ENCODE measurements at regions of chr2 and their contacts with region 1.

Region 1: DNA sequence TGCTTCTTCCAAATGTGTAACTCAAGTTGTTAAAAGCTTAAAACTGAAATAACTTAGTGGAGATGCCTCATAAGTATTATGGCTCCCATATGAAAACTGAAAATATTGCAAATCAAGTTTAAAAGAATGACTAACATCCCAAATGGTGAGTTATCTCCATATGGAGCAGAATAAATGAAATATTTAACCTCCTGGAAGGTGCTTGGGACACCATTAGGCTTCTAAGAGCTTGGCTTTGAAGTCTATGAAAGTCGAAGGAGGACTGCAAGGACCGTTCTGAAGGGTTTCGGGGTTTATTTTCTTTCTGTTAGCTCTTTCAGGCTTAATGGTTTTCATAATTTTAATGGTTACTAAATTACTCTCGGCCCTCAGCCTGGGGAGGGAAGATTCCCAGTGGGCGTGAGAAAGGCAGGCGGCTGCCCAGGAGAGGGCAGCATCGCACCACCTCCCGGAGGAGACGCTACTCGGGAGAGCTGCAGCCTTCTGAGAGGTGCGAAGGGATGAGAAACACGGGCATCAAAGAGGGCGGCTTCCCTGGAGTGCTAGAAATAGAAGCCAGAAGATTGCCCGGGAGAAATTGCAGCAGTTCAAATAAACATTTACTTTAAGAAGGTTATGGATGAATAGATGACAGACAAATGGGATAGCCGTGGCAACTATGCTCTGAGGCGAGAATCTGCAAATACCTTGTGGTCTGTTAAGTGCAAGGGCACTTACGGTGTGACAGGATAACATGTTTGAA is 43.1 kb downstream of the MAP3K19 start:
- DNase-seq: peak; percentile 40 to 68
- H3K4me3 ChIP-seq: no peak overlapping the region
- H3K27ac ChIP-seq: no peak overlapping the region
- H3K4me1 ChIP-seq: no peaks in the 10 kb centered on the region
- H3K27me3 ChIP-seq: no peaks in the 10 kb centered on the region
- CTCF ChIP-seq: peak; percentile 95

Region 2: DNA sequence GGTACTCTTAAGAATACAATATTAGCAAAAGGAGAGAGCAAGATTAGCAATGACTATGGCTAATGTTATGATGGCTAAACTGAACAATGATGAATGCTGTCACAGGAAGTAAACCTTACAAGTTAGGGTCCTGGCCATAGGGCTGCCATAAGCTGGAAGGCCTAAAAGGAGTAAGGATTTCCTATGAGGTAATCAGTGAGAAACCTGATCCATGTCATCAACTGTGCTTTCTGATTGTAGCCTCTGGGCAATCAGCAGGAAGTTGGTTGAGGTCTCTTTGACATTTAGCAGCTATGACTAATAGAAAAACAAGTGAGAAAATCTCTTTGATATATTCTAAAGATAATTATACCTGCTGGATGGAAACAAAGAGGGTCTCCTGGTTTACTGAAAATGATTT is 240.9 kb after region 1 on chr2:
- CTCF ChIA-PET with region 1: no interaction called
- POLR2A ChIA-PET with region 1: no interaction called
- intact Hi-C with region 1: loop called (anchors 10 kb)
- DNase-seq: peak; percentile 33 to 89
- H3K4me3 ChIP-seq: no peak overlapping the region
- H3K27ac ChIP-seq: peak overlapping the region; percentile 60
- H3K4me1 ChIP-seq: peaks cover 14% of the 10 kb centered on the region
- H3K27me3 ChIP-seq: no peaks in the 10 kb centered on the region
- CTCF ChIP-seq: no peak

Region 3: DNA sequence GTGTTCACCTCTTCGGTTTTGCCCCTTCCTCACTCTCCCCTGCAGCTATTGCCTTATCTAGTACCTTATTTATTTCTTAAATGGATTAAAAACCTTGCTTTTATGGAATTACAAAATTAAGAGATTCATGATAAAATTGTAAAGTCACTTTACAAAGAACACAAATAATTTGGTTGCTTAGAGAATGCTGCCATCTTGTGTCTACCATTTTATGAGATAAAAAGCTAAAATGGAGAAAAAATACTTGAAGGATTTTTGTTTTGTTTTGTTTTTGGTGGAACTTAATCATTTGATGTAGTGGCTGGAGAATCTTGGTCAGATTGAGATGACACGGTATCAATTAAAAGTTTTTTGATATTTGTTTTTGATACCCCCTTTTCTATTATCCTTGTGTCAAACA is 596.7 kb after region 1 on chr2:
- CTCF ChIA-PET with region 1: interaction called, 4 read pairs
- POLR2A ChIA-PET with region 1: no interaction called
- intact Hi-C with region 1: loop called (anchors 2 kb)
- DNase-seq: no peak
- H3K4me3 ChIP-seq: no peak overlapping the region
- H3K27ac ChIP-seq: no peak overlapping the region
- H3K4me1 ChIP-seq: no peaks in the 10 kb centered on the region
- H3K27me3 ChIP-seq: no peaks in the 10 kb centered on the region
- CTCF ChIP-seq: peak; percentile 32; the same call in 1 of the 2 replicates

Region 4: DNA sequence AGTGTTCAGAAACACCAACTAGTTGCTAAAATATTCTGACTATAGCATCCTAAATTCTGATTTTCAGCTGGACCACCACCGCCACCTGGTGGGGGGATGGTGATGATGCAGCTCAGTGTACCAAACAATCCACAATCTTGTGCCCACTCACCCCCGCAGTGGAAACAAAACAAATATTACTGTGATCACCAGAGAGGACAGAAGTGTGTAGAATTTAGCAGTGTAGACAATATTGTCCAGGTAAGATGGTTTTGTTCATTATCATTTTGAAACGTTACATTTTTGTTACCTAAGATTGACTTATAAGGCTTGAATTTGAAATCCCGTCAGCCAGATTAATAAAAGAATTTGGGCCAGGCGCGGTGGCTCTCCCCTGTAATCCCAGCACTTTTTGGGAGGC is 705.8 kb after region 1 on chr2:
- CTCF ChIA-PET with region 1: interaction called, 7 read pairs
- POLR2A ChIA-PET with region 1: interaction called, 4 read pairs
- intact Hi-C with region 1: loop called (anchors 1 kb)
- DNase-seq: peak in 1 of 2 experiments; percentile 53
- H3K4me3 ChIP-seq: no peak overlapping the region
- H3K27ac ChIP-seq: no peak overlapping the region
- H3K4me1 ChIP-seq: no peaks in the 10 kb centered on the region
- H3K27me3 ChIP-seq: no peaks in the 10 kb centered on the region
- CTCF ChIP-seq: peak; percentile 96

Region 5: DNA sequence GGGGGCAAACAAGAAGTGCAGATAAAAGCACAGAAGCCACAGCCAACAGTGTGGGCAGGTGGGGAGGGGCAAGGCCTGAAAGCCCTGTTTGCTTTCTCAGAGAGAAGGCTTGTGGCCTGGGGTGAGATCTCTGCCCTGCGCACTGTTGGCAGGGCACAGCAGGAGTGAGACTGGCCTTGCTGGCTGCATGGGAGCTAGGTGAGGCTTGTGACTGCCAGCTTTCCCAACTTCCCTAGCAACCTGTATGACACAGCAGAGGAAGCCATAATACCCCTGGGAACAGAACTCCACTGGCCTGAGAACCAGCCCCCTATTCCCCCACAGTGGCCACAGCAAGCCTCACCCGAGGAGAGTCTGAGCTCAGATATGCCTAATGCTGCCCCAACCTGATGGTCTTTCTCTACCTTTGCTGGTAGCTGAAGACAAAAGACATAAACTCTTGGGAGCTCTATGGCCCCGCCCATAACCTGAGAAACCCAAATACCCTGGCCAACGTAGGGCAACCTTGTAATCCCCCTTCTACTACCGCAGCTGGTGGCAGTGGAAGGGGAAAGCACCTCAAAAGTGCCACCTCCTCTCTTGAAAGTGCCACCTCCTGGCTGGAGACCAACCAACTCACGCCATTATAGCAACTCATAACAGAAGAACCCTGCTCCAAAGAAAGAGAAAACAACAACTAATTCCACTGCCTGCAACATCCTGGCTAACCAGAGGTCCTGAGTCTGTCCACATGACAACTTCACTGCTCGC is 788.4 kb after region 1 on chr2:
- CTCF ChIA-PET with region 1: no interaction called
- POLR2A ChIA-PET with region 1: no interaction called
- intact Hi-C with region 1: loop called (anchors 5 kb)
- DNase-seq: peak in 1 of 2 experiments; percentile 45
- H3K4me3 ChIP-seq: no peak overlapping the region
- H3K27ac ChIP-seq: no peak overlapping the region
- H3K4me1 ChIP-seq: peaks cover 14% of the 10 kb centered on the region
- H3K27me3 ChIP-seq: no peaks in the 10 kb centered on the region
- CTCF ChIP-seq: no peak

Region 6: GRCh38 chr2:135829378-135830135 is 825.4 kb after region 1 on chr2:
- CTCF ChIA-PET with region 1: interaction called, 11 read pairs
- POLR2A ChIA-PET with region 1: no interaction called
- intact Hi-C with region 1: no loop called
- DNase-seq: no peak
- H3K4me3 ChIP-seq: no peak overlapping the region
- H3K27ac ChIP-seq: no peak overlapping the region
- H3K4me1 ChIP-seq: no peaks in the 10 kb centered on the region
- H3K27me3 ChIP-seq: peaks cover 5% of the 10 kb centered on the region; the same call in 1 of the 2 replicates
- CTCF ChIP-seq: no peak

Region 7: DNA sequence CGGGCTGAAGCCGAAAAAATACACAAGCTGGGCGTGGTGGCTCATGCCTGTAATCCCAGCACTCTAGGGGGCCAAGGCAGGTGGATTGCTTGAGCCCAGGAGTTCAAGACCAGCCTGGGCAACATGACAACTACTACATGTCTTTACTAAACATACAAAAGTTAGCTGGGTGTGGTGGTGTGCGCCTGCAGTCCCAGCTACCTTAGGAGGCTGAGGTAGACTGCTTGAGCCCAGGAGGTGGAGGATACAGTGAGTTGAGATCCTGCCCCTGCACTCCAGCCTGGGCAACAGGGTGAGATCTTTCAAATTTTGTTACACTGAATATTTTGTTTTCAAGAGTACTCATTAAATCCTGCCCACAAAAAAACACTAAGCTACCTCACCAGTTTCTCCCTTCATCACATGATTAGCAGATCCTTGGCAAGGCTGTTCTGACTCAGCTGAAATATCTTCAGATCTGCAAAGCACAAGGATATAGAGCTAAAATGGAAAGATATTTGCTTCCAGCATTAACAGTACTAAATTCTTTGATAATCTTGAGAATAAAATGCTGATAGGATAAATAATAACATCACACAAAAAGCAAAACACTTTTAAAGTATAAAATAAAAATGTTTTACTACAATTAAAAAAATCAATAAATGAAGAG is 900.3 kb after region 1 on chr2:
- CTCF ChIA-PET with region 1: no interaction called
- POLR2A ChIA-PET with region 1: no interaction called
- intact Hi-C with region 1: loop called (anchors 10 kb)
- DNase-seq: peak; percentile 3 to 50
- H3K4me3 ChIP-seq: no peak overlapping the region
- H3K27ac ChIP-seq: peak overlapping the region; percentile 40
- H3K4me1 ChIP-seq: no peaks in the 10 kb centered on the region
- H3K27me3 ChIP-seq: no peaks in the 10 kb centered on the region
- CTCF ChIP-seq: no peak